ENCODE measurements at regions of chr19 and their contacts with region 1.

Region 1: DNA sequence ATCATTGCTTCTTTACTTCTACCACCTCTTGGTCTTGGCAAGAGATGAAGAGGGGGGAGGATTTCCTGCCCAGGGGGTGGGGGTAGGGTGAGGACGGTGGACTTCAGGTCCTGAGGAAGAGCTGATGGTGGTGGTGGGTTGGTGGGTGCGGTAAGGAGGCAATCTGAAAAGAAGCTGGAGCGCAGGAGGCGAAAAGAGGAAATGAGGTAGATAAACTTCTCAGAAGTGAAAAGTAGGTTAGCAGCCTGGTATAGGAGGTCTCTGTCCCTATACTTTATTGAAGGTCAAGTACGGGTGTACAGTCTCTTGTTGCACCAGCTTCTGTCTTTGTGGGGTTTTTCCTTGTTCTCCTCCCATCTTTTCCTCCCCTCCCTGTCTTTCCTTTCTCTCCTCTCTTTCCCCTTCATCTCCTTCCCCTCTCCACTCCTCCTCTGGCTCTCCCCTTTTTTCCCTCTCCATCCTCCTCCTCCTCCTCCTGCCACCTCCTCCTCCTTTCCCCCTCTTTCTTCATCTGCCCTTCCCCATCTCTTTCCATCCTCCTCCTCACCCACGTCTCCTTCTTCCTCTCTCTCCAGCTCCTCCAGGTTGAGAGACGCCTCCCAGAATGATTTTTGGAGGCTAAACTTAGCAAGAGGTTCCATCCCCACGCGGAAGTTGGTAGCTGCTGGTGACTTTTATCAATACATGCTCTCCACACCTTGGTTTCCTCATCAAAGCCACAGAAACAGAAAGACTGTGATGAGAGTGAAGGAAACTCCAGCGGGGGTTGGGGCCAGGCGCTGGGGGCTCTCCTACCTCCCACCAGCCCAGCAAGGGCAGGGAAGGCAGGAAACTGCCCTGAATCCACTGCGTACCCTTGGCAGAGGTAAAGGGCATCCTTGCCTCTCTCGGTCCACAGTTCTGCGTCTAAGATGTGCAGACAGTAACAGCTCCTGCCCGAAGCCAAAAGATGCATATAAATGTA is 15.3 kb downstream of the TNFSF14 start:
- DNase-seq: peak; percentile 26 to 65 (median 35)
- H3K4me3 ChIP-seq: peak overlapping the region; percentile 44
- H3K4me3 Mint-ChIP-seq: peak overlapping the region; percentile 72 to 93 (median 85)
- H3K27ac ChIP-seq: peak overlapping the region; percentile 36
- H3K27ac Mint-ChIP-seq: peak overlapping the region; percentile 91 to 98 (median 94)
- H3K4me1 ChIP-seq: peaks cover 36% of the 10 kb centered on the region
- H3K4me1 Mint-ChIP-seq: peaks cover 47 to 58% (median 53%) of the 10 kb centered on the region in 3 donors
- H3K27me3 ChIP-seq: no peaks in the 10 kb centered on the region
- H3K27me3 Mint-ChIP-seq: peaks cover 0 to 2% of the 10 kb centered on the region in 2 donors

Region 2: GRCh38 chr19:6668691-6669090 is 14.1 kb after region 1 on chr19:
- CTCF ChIA-PET with region 1: interaction called, 6 read pairs
- POLR2A ChIA-PET with region 1: interaction called, 11 read pairs
- DNase-seq: peak in 3 of 5 donors; percentile 14 to 58 (median 48)
- H3K4me3 ChIP-seq: peak overlapping the region; percentile 86
- H3K4me3 Mint-ChIP-seq: peak overlapping the region; percentile 98 to 100 (median 100)
- H3K27ac ChIP-seq: peak overlapping the region; percentile 79
- H3K27ac Mint-ChIP-seq: peak overlapping the region; percentile 94 to 100 (median 99)
- H3K4me1 ChIP-seq: peaks cover 34% of the 10 kb centered on the region
- H3K4me1 Mint-ChIP-seq: peaks cover 38 to 52% (median 46%) of the 10 kb centered on the region in 3 donors
- H3K27me3 ChIP-seq: no peaks in the 10 kb centered on the region
- H3K27me3 Mint-ChIP-seq: peaks cover 0 to 5% of the 10 kb centered on the region in 2 donors

Measured in CD8-positive, alpha-beta memory T cell (primary cell).